ENCODE measurements at regions of chr20 and their contacts with region 1.

Region 1: DNA sequence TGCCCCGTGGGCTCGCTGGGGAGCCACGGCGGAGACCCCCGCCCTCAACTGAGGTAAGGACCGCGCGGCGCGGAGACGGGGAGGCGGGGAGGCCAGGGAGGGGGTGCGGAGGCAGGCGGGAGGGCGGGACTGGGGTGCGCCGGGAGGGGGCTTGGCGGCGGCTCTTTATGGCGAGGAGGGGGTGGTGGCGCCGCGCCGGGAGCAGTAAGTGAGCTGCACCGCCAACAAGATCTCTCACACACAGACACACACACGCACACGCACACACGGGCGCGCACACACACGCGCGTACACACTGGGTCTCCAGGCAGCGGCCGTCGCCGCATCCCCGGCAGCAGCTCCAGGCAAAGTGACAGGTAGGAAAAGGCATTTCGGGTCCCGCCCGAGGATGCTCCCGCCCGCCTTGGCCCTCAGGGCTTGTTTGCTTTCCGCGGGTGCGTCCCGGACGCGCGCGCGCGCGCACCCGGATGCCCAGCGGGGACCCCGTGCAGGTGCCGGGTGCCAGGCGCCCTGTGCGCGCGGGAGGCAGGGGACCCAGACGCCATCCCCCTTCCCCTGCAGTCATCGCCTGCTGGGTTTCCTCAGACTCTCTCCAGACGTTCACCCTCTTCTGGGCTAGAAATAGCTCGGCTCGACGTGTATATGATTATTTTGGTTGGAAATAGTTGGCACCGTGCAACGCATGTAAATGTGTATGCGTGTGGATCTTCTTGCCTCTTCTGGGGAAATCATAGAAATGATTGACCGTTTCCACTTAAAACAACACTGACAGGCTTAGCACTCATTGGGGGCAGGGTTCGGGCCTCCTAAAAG is at the start of gene PLCB4:
- DNase-seq: no peak
- H3K4me3 ChIP-seq: peak within 1 kb of the TSS; percentile 82 to 93 (median 88)
- H3K27ac ChIP-seq: peak within 1 kb of the TSS; percentile 86 to 92 (median 89)
- H3K4me1 ChIP-seq: peaks cover 17 to 43% (median 42%) of the 10 kb centered on the region in 4 donors
- H3K27me3 ChIP-seq: no peaks in the 10 kb centered on the region
- CTCF ChIP-seq: no peak
- EP300 ChIP-seq: no peak
- POLR2A ChIP-seq: no peak
- total RNA-seq, gene PLCB4: 30.7 to 61.8 (median 47.6) TPM

Region 2: GRCh38 chr20:8790442-8791074 is 278.5 kb before region 1 on chr20:
- intact Hi-C with region 1: loop called (anchors 5 kb)
- DNase-seq: no peak
- H3K4me3 ChIP-seq: no peak overlapping the region
- H3K27ac ChIP-seq: no peak overlapping the region
- H3K4me1 ChIP-seq: peaks cover 8 to 13% (median 8%) of the 10 kb centered on the region in 4 donors
- H3K27me3 ChIP-seq: no peaks in the 10 kb centered on the region
- CTCF ChIP-seq: peak; percentile 91 to 96 (median 95)
- EP300 ChIP-seq: no peak
- POLR2A ChIP-seq: no peak

Region 3: DNA sequence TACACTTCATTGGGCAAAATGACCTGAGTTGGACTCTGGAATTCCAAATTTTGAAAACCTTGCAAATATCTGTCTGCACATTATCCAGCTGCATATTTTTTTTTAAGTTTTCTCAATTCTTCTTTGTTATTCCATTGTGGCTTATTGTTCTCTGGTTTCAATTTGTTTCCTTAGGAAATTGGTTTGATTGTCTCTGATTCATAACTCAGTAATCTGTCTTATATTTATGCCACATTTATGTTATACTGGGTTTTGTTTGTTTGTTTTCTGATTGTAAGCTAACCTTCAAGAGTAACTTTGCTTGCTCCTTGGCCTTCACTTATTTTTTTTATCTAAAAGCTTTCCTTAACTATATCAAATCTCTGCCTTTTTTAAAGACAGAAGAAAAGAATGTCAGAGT is 193.5 kb before region 1 on chr20:
- intact Hi-C with region 1: no loop called
- DNase-seq: no peak
- H3K4me3 ChIP-seq: no peak overlapping the region
- H3K27ac ChIP-seq: peak overlapping the region in 1 of 4 donors; percentile 26
- H3K4me1 ChIP-seq: peaks cover 0 to 32% (median 14%) of the 10 kb centered on the region in 4 donors
- H3K27me3 ChIP-seq: no peaks in the 10 kb centered on the region
- CTCF ChIP-seq: no peak
- EP300 ChIP-seq: no peak
- POLR2A ChIP-seq: no peak

Region 4: GRCh38 chr20:9215539-9215938 is 146.5 kb after region 1 on chr20:
- intact Hi-C with region 1: loop called (anchors 5 kb)
- DNase-seq: no peak
- H3K4me3 ChIP-seq: no peak overlapping the region
- H3K27ac ChIP-seq: peak overlapping the region; percentile 2 to 62 (median 49)
- H3K4me1 ChIP-seq: peaks cover 19 to 66% (median 42%) of the 10 kb centered on the region in 4 donors
- H3K27me3 ChIP-seq: no peaks in the 10 kb centered on the region
- CTCF ChIP-seq: peak in 2 of 3 experiments; percentile 34 to 37
- EP300 ChIP-seq: no peak
- POLR2A ChIP-seq: no peak

Region 5: GRCh38 chr20:9353180-9353915 is 284.3 kb after region 1 on chr20:
- intact Hi-C with region 1: loop called (anchors 5 kb)
- DNase-seq: no peak
- H3K4me3 ChIP-seq: no peak overlapping the region
- H3K27ac ChIP-seq: no peak overlapping the region
- H3K4me1 ChIP-seq: peaks cover 19 to 36% (median 27%) of the 10 kb centered on the region in 4 donors
- H3K27me3 ChIP-seq: no peaks in the 10 kb centered on the region
- CTCF ChIP-seq: no peak
- EP300 ChIP-seq: no peak
- POLR2A ChIP-seq: no peak

Measured in esophagus muscularis mucosa (tissue), 4 donors.